GM12878 (cell line): ENCODE measurements at regions of chr1 and their contacts with region 1.

Region 1: DNA sequence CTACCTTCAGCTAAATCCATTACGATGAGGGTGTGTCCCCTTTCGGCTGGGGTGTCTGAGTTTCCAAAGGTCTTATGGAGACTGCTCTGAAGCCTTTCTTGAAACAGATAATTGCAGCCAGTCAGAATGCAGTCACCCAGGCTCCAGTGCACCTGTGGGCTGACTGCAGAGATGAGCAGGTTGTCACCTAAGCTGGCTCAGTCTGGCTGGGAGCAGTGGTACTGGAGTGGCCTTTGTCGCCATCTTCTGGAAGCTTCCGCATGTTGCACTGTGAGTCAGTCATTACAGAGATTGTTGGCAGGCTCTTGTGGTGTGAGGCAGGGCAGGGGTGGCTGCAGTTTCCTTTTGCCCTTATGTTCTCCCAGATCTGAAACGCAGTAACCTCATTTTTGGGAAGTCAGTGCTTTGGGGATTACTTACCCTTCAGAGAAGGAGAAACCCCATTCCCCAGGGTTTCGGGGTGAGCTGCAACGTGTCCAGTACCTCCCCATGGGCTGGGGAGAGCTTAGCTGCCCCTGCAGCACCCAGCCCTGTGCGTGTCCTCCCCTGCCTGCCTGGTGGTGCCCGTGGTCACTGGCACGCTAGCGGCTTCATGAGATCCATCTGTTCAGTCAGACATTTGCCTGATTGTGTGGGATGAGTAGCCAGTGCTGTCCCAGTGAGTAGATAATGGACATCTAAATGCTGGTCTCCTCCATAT is 48.0 kb downstream of the SMYD2 start:
- DNase-seq: peak; percentile 26
- ATAC-seq: peak; percentile 92
- H3K4me3 ChIP-seq: no peak overlapping the region
- H3K27ac ChIP-seq: no peak overlapping the region
- H3K4me1 ChIP-seq: peaks cover 4% of the 10 kb centered on the region; the same call in 1 of the 2 replicates
- H3K27me3 ChIP-seq: no peaks in the 10 kb centered on the region
- CTCF ChIP-seq: peak; percentile 89 to 93 (median 91)
- EP300 ChIP-seq: no peak
- POLR2A ChIP-seq: no peak
- RAD21 ChIP-seq: peak; percentile 99

Region 2: DNA sequence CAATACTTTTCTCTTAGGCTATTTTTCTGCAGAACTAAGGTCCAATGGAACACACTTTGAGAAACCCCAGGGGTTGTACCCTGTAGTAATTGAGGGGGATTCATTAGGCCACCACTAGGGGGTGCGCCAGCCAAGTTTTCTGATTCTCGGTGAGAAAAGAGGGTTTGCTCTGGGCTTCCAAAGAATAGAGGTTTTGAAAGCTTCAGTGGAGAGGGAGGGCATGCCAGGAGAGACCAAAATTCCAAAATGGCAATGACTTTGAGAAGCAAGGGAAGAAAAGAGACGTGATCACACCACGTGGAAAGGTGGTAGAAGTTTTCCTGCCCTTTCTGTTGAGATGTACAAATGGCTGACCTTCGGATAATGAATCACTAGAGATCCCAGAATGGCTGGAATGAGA is 954.6 kb before region 1 on chr1:
- CTCF ChIA-PET with region 1: interaction called, 5 read pairs
- POLR2A ChIA-PET with region 1: no interaction called
- RAD21 ChIA-PET with region 1: no interaction called
- SMC1A ChIA-PET with region 1: interaction called, 4 read pairs
- in situ Hi-C with region 1: loop called (anchors 10 kb)
- intact Hi-C with region 1: loop called (anchors 2 kb)
- DNase-seq: no peak
- ATAC-seq: peak; percentile 96
- H3K4me3 ChIP-seq: no peak overlapping the region
- H3K27ac ChIP-seq: no peak overlapping the region
- H3K4me1 ChIP-seq: no peaks in the 10 kb centered on the region
- H3K27me3 ChIP-seq: no peaks in the 10 kb centered on the region
- CTCF ChIP-seq: peak; percentile 84 to 86 (median 84)
- EP300 ChIP-seq: no peak
- POLR2A ChIP-seq: no peak
- RAD21 ChIP-seq: peak; percentile 86

Region 3: DNA sequence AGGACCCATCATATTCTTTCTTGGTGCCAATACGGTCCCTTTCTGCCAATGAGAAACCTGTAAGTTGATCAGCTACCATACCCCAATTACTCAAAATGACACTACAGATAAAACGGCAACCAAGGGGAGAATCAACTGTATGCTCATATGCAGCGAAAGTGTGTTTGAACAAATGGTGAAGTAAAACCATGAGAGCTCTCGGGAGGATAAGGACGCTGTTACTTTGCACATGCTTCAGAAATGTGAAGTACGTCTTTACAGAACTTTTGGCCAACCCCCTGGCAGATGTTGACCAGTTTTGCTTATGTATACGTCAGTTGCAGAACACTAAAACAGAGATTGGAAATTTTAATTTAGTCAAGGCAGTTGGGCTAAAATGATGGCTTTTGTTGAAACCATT is 261.5 kb before region 1 on chr1:
- CTCF ChIA-PET with region 1: no interaction called
- POLR2A ChIA-PET with region 1: no interaction called
- RAD21 ChIA-PET with region 1: no interaction called
- SMC1A ChIA-PET with region 1: no interaction called
- in situ Hi-C with region 1: no loop called
- intact Hi-C with region 1: no loop called
- DNase-seq: no peak
- ATAC-seq: no peak
- H3K4me3 ChIP-seq: no peak overlapping the region
- H3K27ac ChIP-seq: no peak overlapping the region
- H3K4me1 ChIP-seq: no peaks in the 10 kb centered on the region
- H3K27me3 ChIP-seq: no peaks in the 10 kb centered on the region; a peak in 2 of 4 replicates
- CTCF ChIP-seq: no peak
- EP300 ChIP-seq: no peak
- POLR2A ChIP-seq: no peak
- RAD21 ChIP-seq: no peak

Region 4: GRCh38 chr1:214261206-214262123 is 67.5 kb before region 1 on chr1:
- CTCF ChIA-PET with region 1: interaction called, 576 read pairs
- POLR2A ChIA-PET with region 1: interaction called, 4 read pairs
- RAD21 ChIA-PET with region 1: interaction called, 175 read pairs
- SMC1A ChIA-PET with region 1: interaction called, 323 read pairs
- in situ Hi-C with region 1: loop called (anchors 5 kb)
- intact Hi-C with region 1: loop called (anchors 1 kb)
- DNase-seq: no peak
- ATAC-seq: peak; percentile 99
- H3K4me3 ChIP-seq: no peak overlapping the region
- H3K27ac ChIP-seq: no peak overlapping the region
- H3K4me1 ChIP-seq: no peaks in the 10 kb centered on the region
- H3K27me3 ChIP-seq: peaks cover 2 to 3% of the 10 kb centered on the region in 2 experiments; a peak in 1 of 4 replicates
- CTCF ChIP-seq: peak; percentile 91 to 98 (median 95); a peak in 5 of 6 replicates
- EP300 ChIP-seq: no peak
- POLR2A ChIP-seq: no peak
- RAD21 ChIP-seq: peak; percentile 87

Region 5: DNA sequence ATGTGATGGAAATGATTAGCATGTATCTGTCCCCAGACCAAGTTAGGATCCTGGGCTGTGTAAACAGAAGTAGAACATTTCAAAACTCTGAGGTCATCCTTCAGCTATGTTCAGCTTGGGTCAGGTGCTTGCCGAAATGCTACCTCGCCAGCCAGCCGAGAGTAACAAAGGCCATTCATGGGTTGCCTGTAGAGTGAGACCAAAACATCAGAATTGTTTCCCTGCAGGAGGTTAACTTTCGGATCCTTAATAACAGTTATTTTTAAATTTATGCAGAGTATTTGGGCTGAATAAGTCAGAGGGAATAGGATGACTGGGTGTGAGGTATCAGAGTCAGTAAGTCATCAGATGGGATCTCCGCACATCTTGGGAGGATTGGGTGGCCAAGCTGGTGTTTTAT is 12.3 kb before region 1 on chr1:
- CTCF ChIA-PET with region 1: interaction called, 132 read pairs
- POLR2A ChIA-PET with region 1: interaction called, 3 read pairs
- RAD21 ChIA-PET with region 1: interaction called, 17 read pairs
- SMC1A ChIA-PET with region 1: interaction called, 31 read pairs
- in situ Hi-C with region 1: no loop called
- intact Hi-C with region 1: no loop called
- DNase-seq: no peak
- ATAC-seq: no peak; the same call in 2 of the 3 replicates
- H3K4me3 ChIP-seq: no peak overlapping the region
- H3K27ac ChIP-seq: no peak overlapping the region
- H3K4me1 ChIP-seq: peaks cover 7% of the 10 kb centered on the region
- H3K27me3 ChIP-seq: no peaks in the 10 kb centered on the region
- CTCF ChIP-seq: no peak
- EP300 ChIP-seq: no peak
- POLR2A ChIP-seq: no peak
- RAD21 ChIP-seq: no peak

Region 6: DNA sequence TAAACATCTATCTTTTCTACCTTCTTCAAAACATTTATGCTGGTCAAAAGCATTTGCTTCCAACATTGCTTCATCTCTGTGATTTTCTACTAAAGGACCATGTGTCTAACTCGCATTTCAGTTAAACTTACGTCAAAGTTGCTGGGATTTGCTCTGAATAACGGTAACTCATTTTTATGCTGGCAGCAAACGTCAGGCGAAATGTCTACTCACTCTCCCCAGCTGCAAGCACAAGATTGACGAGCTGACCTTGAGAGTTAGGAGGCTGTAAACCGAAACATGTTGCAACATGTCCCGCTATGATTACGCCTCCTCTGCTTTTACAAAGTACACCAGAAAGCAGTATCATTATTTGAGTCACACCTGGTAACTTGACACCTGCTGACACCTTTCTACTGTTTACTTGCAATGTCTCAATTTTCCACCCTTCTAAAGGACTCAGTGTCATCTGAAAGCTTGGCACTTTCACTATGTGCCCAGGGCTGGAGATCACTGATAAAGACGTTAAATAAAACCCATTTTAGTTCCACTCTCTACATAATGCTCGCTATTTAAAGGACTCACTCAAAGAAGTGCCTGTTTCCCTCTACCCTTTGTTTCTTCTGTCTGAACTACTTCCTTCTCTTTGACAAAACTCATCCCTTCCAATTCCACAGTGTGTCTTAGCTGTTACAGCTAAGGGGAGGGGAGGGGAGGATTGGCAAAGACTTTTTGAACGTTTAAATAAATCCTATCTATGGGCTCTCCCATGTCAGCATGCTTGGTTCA is 110.6 kb after region 1 on chr1:
- CTCF ChIA-PET with region 1: interaction called, 9 read pairs
- POLR2A ChIA-PET with region 1: interaction called, 4 read pairs
- RAD21 ChIA-PET with region 1: interaction called, 8 read pairs
- SMC1A ChIA-PET with region 1: interaction called, 10 read pairs
- in situ Hi-C with region 1: no loop called
- intact Hi-C with region 1: no loop called
- DNase-seq: peak; percentile 60
- ATAC-seq: peak; percentile 85
- H3K4me3 ChIP-seq: peak overlapping the region; percentile 0; the same call in 1 of the 2 replicates
- H3K27ac ChIP-seq: peak overlapping the region; percentile 43
- H3K4me1 ChIP-seq: peaks cover 12% of the 10 kb centered on the region
- H3K27me3 ChIP-seq: no peaks in the 10 kb centered on the region
- CTCF ChIP-seq: no peak
- EP300 ChIP-seq: peak; percentile 77 to 83; a peak in 3 of 4 replicates
- POLR2A ChIP-seq: 0 out of 2 replicates have a peak, but pooled peaks have one; percentile 47
- RAD21 ChIP-seq: no peak

Region 7: GRCh38 chr1:214573386-214574358 is 244.8 kb after region 1 on chr1:
- CTCF ChIA-PET with region 1: interaction called, 597 read pairs
- POLR2A ChIA-PET with region 1: interaction called, 3 read pairs
- RAD21 ChIA-PET with region 1: interaction called, 207 read pairs
- SMC1A ChIA-PET with region 1: interaction called, 292 read pairs
- in situ Hi-C with region 1: no loop called
- intact Hi-C with region 1: no loop called
- DNase-seq: no peak
- ATAC-seq: no peak
- H3K4me3 ChIP-seq: no peak overlapping the region
- H3K27ac ChIP-seq: no peak overlapping the region
- H3K4me1 ChIP-seq: no peaks in the 10 kb centered on the region
- H3K27me3 ChIP-seq: no peaks in the 10 kb centered on the region
- CTCF ChIP-seq: no peak
- EP300 ChIP-seq: no peak
- POLR2A ChIP-seq: no peak
- RAD21 ChIP-seq: no peak

Region 8: GRCh38 chr1:215526553-215527151 is 1197.7 kb after region 1 on chr1:
- CTCF ChIA-PET with region 1: interaction called, 16 read pairs
- POLR2A ChIA-PET with region 1: no interaction called
- RAD21 ChIA-PET with region 1: interaction called, 10 read pairs
- SMC1A ChIA-PET with region 1: interaction called, 3 read pairs
- in situ Hi-C with region 1: loop called (anchors 10 kb)
- intact Hi-C with region 1: loop called (anchors 10 kb)
- DNase-seq: peak; percentile 16
- ATAC-seq: peak; percentile 70
- H3K4me3 ChIP-seq: no peak overlapping the region
- H3K27ac ChIP-seq: no peak overlapping the region
- H3K4me1 ChIP-seq: peaks cover 4% of the 10 kb centered on the region; the same call in 1 of the 2 replicates
- H3K27me3 ChIP-seq: no peaks in the 10 kb centered on the region
- CTCF ChIP-seq: peak; percentile 44 to 69 (median 58); a peak in 5 of 6 replicates
- EP300 ChIP-seq: no peak
- POLR2A ChIP-seq: no peak
- RAD21 ChIP-seq: peak; percentile 74